ENCODE measurements at regions of chr10 and their contacts with region 1.

Region 1: DNA sequence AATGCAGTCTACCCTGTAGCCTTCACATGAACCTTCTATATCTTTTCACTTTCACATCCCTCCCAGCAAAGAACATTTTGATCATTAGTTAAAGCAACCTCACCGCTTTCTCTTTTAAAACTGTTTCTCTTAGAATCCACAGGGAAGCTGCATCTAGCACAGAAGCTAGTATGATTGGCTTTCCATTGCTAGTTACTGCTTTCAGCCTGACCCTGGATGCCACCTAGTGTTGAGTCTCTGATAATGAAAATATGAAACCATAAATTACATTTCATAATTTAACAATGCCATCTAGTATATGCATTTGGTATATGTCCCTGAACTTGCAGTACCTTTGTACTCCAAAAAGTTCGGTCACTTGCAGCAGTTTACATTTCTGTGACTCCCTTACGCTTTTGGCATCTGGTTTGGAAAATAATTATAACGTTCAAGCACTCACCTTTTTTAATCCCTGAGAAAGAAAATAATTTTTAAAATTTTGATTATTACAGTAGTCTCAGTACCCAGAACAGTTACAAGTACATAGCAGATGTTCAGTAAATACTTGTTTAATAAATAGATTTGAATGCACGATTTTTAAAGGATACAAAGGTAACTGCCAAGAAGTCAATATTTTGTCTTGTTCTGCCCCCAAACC is 22.7 kb downstream of the CISD1 start:
- DNase-seq: peak; percentile 67
- H3K4me3 ChIP-seq: no peak overlapping the region
- H3K27ac ChIP-seq: no peak overlapping the region
- H3K4me1 ChIP-seq: peaks cover 6% of the 10 kb centered on the region
- H3K27me3 ChIP-seq: no peaks in the 10 kb centered on the region
- CTCF ChIP-seq: peak; percentile 78

Region 2: GRCh38 chr10:58070956-58071355 is 220.7 kb before region 1 on chr10:
- CTCF ChIA-PET with region 1: no interaction called
- POLR2A ChIA-PET with region 1: no interaction called
- intact Hi-C with region 1: loop called (anchors 5 kb)
- DNase-seq: no peak
- H3K4me3 ChIP-seq: no peak overlapping the region
- H3K27ac ChIP-seq: no peak overlapping the region
- H3K4me1 ChIP-seq: no peaks in the 10 kb centered on the region
- H3K27me3 ChIP-seq: peaks cover 8% of the 10 kb centered on the region
- CTCF ChIP-seq: no peak

Region 3: DNA sequence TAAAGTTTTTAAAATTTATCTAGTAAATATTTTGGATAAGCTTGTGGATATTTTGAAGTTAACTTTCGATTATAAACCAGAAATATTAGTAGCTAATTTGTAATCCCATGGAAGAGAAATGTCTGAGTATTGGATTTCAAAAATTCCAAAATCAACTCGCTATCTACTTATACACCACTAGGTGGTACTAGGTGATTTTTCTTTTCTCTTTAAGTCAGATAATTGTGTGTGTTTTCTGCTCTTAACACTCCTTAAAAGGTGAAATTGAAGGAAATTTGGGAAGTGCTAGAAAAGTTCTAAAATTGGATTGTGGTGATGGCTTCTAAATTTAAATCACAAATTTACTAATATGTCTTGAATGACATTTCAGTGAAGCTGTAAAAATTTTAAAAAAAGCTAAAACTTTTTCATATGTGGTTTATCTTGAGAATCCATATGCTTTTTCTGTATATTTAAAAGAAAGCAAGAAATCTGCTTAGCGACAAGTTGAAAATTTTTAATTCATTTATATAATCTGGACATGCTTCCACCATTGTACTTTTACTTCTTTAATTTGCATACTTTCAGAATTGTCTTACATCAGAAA is 114.2 kb before region 1 on chr10:
- CTCF ChIA-PET with region 1: interaction called, 6 read pairs
- POLR2A ChIA-PET with region 1: interaction called, 7 read pairs
- intact Hi-C with region 1: loop called (anchors 1 kb)
- DNase-seq: peak; percentile 46
- H3K4me3 ChIP-seq: no peak overlapping the region
- H3K27ac ChIP-seq: no peak overlapping the region
- H3K4me1 ChIP-seq: no peaks in the 10 kb centered on the region
- H3K27me3 ChIP-seq: no peaks in the 10 kb centered on the region
- CTCF ChIP-seq: peak; percentile 65